HEK293 (cell line): ENCODE measurements at regions of chr11 and their contacts with region 1.

Region 1: GRCh38 chr11:124402326-124402922 is 3.6 kb upstream of the OR8B3 start:
- H3K4me3 ChIP-seq: no peak overlapping the region
- H3K27ac ChIP-seq: no peak overlapping the region
- H3K4me1 ChIP-seq: no peaks in the 10 kb centered on the region
- CTCF ChIP-seq: no peak

Region 2: DNA sequence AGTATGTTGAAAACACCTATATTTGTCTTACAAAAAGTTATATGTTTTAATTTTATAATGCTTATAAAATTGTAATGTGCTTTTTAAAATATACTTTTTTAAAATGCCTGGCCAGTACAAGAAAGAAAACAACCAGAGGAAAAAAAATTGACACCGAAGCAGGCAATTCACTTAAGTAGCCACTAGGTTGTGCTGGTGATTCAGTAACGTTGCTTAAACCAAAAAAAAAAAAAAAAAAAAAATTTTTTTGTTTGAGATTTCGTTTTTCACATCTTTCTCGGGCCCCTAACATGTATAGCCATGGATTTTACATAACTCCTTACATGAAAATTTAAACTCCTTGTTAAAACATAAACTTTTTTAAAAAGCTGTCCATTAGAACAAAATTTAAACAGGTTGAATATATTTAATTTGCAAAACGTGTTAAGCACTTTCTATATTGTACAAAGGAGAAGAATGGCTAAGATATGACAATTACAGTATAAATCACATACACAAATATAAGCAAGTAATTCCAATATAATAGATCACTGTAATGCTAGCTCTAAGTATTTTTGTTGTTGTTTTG is 13.0 kb after region 1 on chr11:
- CTCF ChIA-PET with region 1: interaction called, 33 read pairs
- POLR2A ChIA-PET with region 1: no interaction called
- H3K4me3 ChIP-seq: no peak overlapping the region
- H3K27ac ChIP-seq: no peak overlapping the region
- H3K4me1 ChIP-seq: no peaks in the 10 kb centered on the region
- CTCF ChIP-seq: no peak

Region 3: GRCh38 chr11:124467381-124467927 is 65.0 kb after region 1 on chr11:
- CTCF ChIA-PET with region 1: interaction called, 11 read pairs
- POLR2A ChIA-PET with region 1: no interaction called
- H3K4me3 ChIP-seq: no peak overlapping the region
- H3K27ac ChIP-seq: no peak overlapping the region
- H3K4me1 ChIP-seq: no peaks in the 10 kb centered on the region
- CTCF ChIP-seq: no peak

Region 4: GRCh38 chr11:124586238-124586860 is 183.9 kb after region 1 on chr11:
- CTCF ChIA-PET with region 1: interaction called, 32 read pairs
- POLR2A ChIA-PET with region 1: no interaction called
- H3K4me3 ChIP-seq: no peak overlapping the region
- H3K27ac ChIP-seq: no peak overlapping the region
- H3K4me1 ChIP-seq: no peaks in the 10 kb centered on the region
- CTCF ChIP-seq: no peak